ENCODE measurements at regions of chr17 and their contacts with region 1.

Region 1: GRCh38 chr17:16066120-16066519 is 66.5 kb downstream of the TTC19 start:
- DNase-seq: no peak

Region 2: GRCh38 chr17:15954222-15954621 is 111.9 kb before region 1 on chr17:
- intact Hi-C with region 1: no loop called
- DNase-seq: peak; percentile 25

Region 3: DNA sequence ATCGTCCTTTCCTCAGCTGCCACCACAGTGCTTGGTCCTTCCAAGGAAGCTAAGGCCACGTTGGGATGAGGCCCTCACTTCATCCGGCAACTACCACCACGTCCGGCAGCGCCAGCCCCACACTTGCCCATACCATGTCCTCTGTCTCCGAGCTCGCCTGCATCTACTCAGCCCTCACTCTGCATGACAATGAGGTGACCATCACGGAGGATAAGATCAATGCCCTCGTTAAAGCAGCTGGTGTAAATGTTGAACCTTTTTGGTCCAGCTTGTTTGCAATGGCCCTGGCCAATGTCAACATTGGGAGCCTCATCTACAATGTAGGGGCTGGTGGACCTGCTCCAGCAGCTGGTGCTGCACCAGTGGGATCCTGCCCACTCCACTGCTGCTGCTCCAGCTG is 21.6 kb before region 1 on chr17:
- intact Hi-C with region 1: loop called in 1 of 2 experiments (anchors 2 kb)
- DNase-seq: no peak